ENCODE measurements at regions of chr17 and their contacts with region 1.

Region 1: GRCh38 chr17:39663688-39664616 is 1.2 kb upstream of the TCAP start:
- DNase-seq: no peak
- H3K4me3 ChIP-seq: no peak overlapping the region
- H3K27ac ChIP-seq: peak overlapping the region; percentile 58 to 64
- H3K4me1 ChIP-seq: peaks cover 16 to 34% of the 10 kb centered on the region in 2 donors
- H3K27me3 ChIP-seq: peaks cover 3 to 6% of the 10 kb centered on the region in 2 donors
- CTCF ChIP-seq: no peak
- POLR2A ChIP-seq: no peak

Region 2: DNA sequence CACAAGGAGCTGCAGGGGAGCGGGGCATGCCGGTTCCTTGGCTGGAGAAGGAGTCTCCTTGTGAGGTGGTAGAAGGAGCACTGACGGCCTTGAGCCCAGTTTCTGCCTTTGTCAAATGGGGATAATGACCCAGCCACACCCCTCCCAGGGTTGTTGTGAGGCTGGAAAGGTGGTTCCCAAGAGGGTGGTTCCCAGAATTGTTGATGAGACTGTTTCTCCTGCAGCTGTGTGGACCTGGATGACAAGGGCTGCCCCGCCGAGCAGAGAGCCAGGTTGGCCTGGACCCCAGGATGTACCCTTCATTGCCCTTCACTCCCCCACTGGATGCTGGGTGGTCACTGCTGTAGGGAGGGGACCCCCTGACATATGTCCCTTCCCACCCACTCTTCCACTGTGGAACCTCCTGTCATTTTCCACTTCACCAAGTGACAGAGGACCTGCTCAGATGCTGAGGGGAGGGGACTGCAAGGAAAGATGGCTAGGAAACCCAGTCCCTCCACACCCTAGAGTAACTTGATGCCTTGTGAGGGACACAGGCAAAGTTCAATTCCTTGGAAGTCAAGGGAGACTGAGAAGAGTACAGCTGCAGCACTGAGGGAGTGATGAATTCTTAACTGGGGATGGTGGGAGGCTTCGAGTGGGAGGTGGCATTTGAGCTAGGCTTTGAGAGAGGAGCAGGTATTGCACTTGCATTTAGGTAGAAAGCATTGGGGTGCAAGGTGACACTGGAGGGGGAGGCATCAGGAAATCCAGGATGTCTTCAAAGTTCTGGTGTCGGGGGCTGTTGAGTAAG is 55.8 kb after region 1 on chr17:
- intact Hi-C with region 1: loop called (anchors 1 kb)
- DNase-seq: no peak
- H3K4me3 ChIP-seq: no peak overlapping the region
- H3K27ac ChIP-seq: no peak overlapping the region
- H3K4me1 ChIP-seq: peaks cover 0 to 4% of the 10 kb centered on the region in 2 donors
- H3K27me3 ChIP-seq: no peaks in the 10 kb centered on the region
- CTCF ChIP-seq: no peak
- POLR2A ChIP-seq: no peak

Region 3: GRCh38 chr17:40577611-40578065 is 913.7 kb after region 1 on chr17:
- intact Hi-C with region 1: no loop called
- DNase-seq: no peak
- H3K4me3 ChIP-seq: no peak overlapping the region
- H3K27ac ChIP-seq: no peak overlapping the region
- H3K4me1 ChIP-seq: peaks cover 0 to 11% of the 10 kb centered on the region in 2 donors
- H3K27me3 ChIP-seq: no peaks in the 10 kb centered on the region
- CTCF ChIP-seq: no peak
- POLR2A ChIP-seq: no peak